ENCODE measurements at regions of chr1 and their contacts with region 1.

Region 1: DNA sequence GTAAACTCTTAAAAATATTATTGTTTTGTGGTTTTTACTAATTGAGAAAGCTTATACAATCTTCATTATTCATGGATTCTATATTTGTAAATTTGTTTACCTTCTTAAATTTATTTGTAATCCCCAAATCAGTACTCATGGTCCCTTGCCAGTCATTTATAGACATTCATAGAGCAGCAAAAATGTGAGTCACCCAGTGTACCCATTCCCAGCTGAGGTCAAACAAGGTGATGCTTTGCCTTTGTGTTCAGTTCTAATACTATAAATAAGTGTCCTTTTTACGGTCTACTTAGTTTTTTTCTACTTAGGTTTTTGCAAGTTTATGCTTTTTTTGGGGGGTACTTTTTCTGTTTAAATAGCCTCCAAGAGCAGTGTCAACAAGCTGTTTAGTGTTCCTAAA is 36.1 kb downstream of the SORT1 start:
- DNase-seq: peak; percentile 40
- ATAC-seq: 0 out of 2 replicates have a peak, but pooled peaks have one; percentile 38
- H3K4me3 ChIP-seq: no peak overlapping the region
- H3K27ac ChIP-seq: no peak overlapping the region; the same call in 1 of the 2 replicates
- H3K4me1 ChIP-seq: peaks cover 6% of the 10 kb centered on the region; the same call in 1 of the 2 replicates
- H3K27me3 ChIP-seq: no peaks in the 10 kb centered on the region
- CTCF ChIP-seq: no peak
- POLR2A ChIP-seq: no peak
- RAD21 ChIP-seq: no peak

Region 2: DNA sequence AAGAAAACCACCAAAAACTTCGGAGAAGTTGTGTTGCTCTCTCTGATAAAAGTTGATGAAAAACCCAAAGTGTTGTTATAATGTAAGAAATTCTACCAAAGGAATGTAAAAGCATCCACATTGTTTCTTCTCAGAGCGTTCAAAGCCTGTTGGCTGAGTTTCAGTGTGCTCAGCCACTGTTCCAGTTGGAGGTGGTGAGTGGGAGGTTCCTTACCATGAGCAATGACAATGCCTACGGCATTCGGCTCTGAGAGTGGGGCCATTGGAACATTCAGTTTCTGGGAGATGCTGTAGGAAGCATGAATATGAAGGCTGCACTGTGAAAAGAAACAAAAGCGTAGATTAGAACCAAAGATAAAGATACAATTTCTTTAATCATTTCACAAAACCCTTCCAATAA is 34.4 kb before region 1 on chr1:
- CTCF ChIA-PET with region 1: no interaction called
- POLR2A ChIA-PET with region 1: no interaction called
- dilution Hi-C with region 1: no loop called
- in situ Hi-C with region 1: no loop called
- intact Hi-C with region 1: loop called (anchors 5 kb)
- DNase-seq: no peak
- ATAC-seq: no peak
- H3K4me3 ChIP-seq: no peak overlapping the region
- H3K27ac ChIP-seq: no peak overlapping the region
- H3K4me1 ChIP-seq: no peaks in the 10 kb centered on the region
- H3K27me3 ChIP-seq: no peaks in the 10 kb centered on the region
- CTCF ChIP-seq: no peak
- POLR2A ChIP-seq: no peak
- RAD21 ChIP-seq: no peak

Region 3: DNA sequence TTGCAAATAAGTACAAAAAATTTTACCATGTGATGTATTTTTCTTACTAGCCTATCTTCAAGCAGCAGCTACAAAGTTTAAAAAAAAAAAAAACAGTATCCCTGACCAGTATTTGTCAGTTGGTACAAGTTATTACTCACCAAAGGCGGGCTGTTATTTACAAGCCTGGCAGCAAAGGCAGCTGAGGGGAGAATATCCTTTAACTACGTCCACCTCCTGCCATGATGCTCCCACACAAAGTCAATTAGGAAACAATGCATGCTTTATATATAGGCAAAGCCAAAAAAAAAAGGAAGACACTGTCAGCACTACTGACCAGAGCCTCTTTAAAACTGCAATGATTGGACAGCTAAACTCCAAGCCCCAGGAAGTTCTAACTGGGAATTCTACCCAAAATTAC is 50.9 kb after region 1 on chr1:
- CTCF ChIA-PET with region 1: no interaction called
- POLR2A ChIA-PET with region 1: no interaction called
- dilution Hi-C with region 1: no loop called
- in situ Hi-C with region 1: no loop called
- intact Hi-C with region 1: no loop called
- DNase-seq: no peak
- ATAC-seq: no peak
- H3K4me3 ChIP-seq: no peak overlapping the region
- H3K27ac ChIP-seq: no peak overlapping the region
- H3K4me1 ChIP-seq: peaks cover 4% of the 10 kb centered on the region
- H3K27me3 ChIP-seq: no peaks in the 10 kb centered on the region
- CTCF ChIP-seq: no peak
- POLR2A ChIP-seq: no peak
- RAD21 ChIP-seq: no peak